ENCODE measurements at regions of chr1 and their contacts with region 1.

Region 1: DNA sequence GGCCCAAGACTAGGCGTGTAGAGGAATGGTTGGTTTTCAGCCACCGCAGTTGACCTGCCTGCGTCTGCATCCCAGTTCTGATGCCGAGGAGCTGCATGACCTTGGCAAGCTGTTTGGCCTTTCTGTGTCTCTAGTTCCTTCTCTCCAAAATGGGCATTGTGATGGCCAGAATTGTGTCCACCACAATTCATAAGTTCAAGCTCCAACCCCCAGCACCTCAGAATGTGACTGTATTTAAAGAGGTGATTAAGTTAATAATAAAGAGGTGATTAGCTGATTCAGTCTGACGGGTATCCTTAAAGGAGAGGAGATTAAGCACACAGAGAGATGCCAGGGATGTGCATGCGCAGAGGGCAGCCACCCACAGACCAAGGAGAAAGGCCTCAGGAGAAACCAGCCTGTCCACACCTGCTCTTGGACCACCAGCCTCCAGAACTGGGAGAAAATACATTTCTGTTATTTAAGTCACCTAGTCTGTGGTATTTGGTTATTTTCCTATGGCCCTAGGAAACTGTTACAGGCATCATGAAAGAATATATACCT is 28.5 kb downstream of the MAB21L3 start:
- DNase-seq: no peak
- H3K4me3 Mint-ChIP-seq: no peak overlapping the region
- H3K27ac Mint-ChIP-seq: no peak overlapping the region
- H3K4me1 Mint-ChIP-seq: peaks cover 5% of the 10 kb centered on the region
- H3K27me3 Mint-ChIP-seq: peaks cover 20% of the 10 kb centered on the region

Region 2: GRCh38 chr1:115949156-115949555 is 190.5 kb before region 1 on chr1:
- intact Hi-C with region 1: no loop called
- DNase-seq: no peak
- H3K4me3 Mint-ChIP-seq: no peak overlapping the region
- H3K27ac Mint-ChIP-seq: no peak overlapping the region
- H3K4me1 Mint-ChIP-seq: peaks cover 4% of the 10 kb centered on the region
- H3K27me3 Mint-ChIP-seq: peaks cover 12% of the 10 kb centered on the region

Region 3: DNA sequence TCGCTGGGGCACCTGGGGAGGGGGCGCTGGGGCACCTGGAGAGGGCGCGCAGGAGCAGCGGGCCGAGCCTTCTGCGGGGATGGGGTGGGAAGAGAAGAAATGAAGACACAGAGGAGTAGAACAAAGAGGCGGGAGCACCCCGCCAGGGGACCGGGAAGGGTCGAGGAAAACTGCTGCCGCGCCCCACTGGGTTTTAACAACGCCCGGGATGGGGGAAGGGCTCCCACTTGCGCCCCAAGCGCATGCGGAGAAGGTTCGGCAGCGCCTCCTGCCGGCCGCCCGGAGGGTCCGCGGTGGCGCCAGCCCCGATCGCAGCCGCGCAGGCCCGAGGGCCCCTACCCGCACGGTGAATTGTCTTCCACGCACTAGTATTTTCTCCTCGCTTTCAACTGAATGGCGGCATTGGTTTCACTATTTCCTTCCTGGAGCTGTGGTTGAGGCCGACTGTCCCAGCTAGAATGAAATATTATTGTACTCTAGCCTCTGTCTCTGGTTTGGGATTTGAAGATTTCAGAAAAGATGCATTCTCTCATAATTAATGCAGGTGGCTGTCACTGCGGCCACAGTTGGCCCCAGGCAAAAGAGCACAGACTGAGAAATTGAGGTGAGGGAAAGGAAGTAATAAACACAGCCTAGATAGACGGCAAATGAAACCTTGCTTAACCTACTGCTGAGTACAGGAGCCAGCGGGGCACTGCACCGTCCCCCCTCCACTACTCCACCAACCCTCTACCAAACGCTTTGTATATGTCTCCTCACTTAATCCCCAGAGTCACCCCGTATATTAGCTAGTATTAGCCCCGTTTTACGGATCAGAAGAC is 28.8 kb after region 1 on chr1:
- intact Hi-C with region 1: loop called (anchors 1 kb)
- DNase-seq: peak; percentile 95
- H3K4me3 Mint-ChIP-seq: peak overlapping the region; percentile 85
- H3K27ac Mint-ChIP-seq: peak overlapping the region; percentile 76
- H3K4me1 Mint-ChIP-seq: peaks cover 9% of the 10 kb centered on the region
- H3K27me3 Mint-ChIP-seq: peaks cover 25% of the 10 kb centered on the region

Region 4: GRCh38 chr1:116498789-116499628 is 359.3 kb after region 1 on chr1:
- intact Hi-C with region 1: loop called (anchors 1 kb)
- DNase-seq: peak; percentile 88
- H3K4me3 Mint-ChIP-seq: no peak overlapping the region
- H3K27ac Mint-ChIP-seq: no peak overlapping the region
- H3K4me1 Mint-ChIP-seq: peaks cover 47% of the 10 kb centered on the region
- H3K27me3 Mint-ChIP-seq: no peaks in the 10 kb centered on the region

Measured in activated CD4-positive, alpha-beta T cell treated with anti-CD3 and anti-CD28 coated beads, Interleukin-2, amount 10 ng/mL, durations not matched to agents 24 days and 14 days (primary cell).